ENCODE measurements at regions of chr11 and their contacts with region 1.

Region 1: GRCh38 chr11:86230921-86231430 is 13.6 kb upstream of the EED start:
- DNase-seq: no peak
- H3K4me3 Mint-ChIP-seq: no peak overlapping the region
- H3K27ac Mint-ChIP-seq: peak overlapping the region; percentile 47
- H3K4me1 Mint-ChIP-seq: peaks cover 68% of the 10 kb centered on the region
- H3K27me3 Mint-ChIP-seq: no peaks in the 10 kb centered on the region

Region 2: GRCh38 chr11:86447763-86448480 is 216.9 kb after region 1 on chr11:
- intact Hi-C with region 1: loop called (anchors 5 kb)
- DNase-seq: peak; percentile 31
- H3K4me3 Mint-ChIP-seq: peak overlapping the region; percentile 48
- H3K27ac Mint-ChIP-seq: no peak overlapping the region
- H3K4me1 Mint-ChIP-seq: peaks cover 43% of the 10 kb centered on the region
- H3K27me3 Mint-ChIP-seq: no peaks in the 10 kb centered on the region

Region 3: GRCh38 chr11:86469491-86470393 is 238.8 kb after region 1 on chr11:
- intact Hi-C with region 1: no loop called
- DNase-seq: no peak
- H3K4me3 Mint-ChIP-seq: no peak overlapping the region
- H3K27ac Mint-ChIP-seq: peak overlapping the region; percentile 24
- H3K4me1 Mint-ChIP-seq: peaks cover 13% of the 10 kb centered on the region
- H3K27me3 Mint-ChIP-seq: no peaks in the 10 kb centered on the region

Measured in activated T-helper 1 cell treated with anti-CD3 and anti-CD28 coated beads, Interleukin-12 subunit alpha, Interleukin-12 subunit beta, Interleukin-2, Interleukin-4 antibody, amounts not matched to agents 30 ng/mL and 10 ng/mL and 1 ng/mL, durations not matched to agents 14 hours and 24 hours and 36 hours (primary cell).